Heart right ventricle (tissue), 16 donors: ENCODE measurements at regions of chr19 and their contacts with region 1.

Region 1: GRCh38 chr19:36378625-36379509 is at the start of gene ZFP14:
- DNase-seq: peak; percentile 93 to 94
- ATAC-seq: peak; percentile 98 to 100 (median 99)
- H3K4me3 ChIP-seq: peak within 1 kb of the TSS; percentile 54 to 86 (median 71)
- H3K27ac ChIP-seq: peak within 1 kb of the TSS; percentile 23 to 92 (median 82)
- H3K4me1 ChIP-seq: peaks cover 7 to 22% (median 11%) of the 10 kb centered on the region in 9 donors
- H3K27me3 ChIP-seq: no peaks in the 10 kb centered on the region
- CTCF ChIP-seq: peak in 6 of 9 donors; percentile 9 to 51 (median 36)
- total RNA-seq, gene ZFP14: 1.0 to 4.0 (median 2.5) TPM

Region 2: DNA sequence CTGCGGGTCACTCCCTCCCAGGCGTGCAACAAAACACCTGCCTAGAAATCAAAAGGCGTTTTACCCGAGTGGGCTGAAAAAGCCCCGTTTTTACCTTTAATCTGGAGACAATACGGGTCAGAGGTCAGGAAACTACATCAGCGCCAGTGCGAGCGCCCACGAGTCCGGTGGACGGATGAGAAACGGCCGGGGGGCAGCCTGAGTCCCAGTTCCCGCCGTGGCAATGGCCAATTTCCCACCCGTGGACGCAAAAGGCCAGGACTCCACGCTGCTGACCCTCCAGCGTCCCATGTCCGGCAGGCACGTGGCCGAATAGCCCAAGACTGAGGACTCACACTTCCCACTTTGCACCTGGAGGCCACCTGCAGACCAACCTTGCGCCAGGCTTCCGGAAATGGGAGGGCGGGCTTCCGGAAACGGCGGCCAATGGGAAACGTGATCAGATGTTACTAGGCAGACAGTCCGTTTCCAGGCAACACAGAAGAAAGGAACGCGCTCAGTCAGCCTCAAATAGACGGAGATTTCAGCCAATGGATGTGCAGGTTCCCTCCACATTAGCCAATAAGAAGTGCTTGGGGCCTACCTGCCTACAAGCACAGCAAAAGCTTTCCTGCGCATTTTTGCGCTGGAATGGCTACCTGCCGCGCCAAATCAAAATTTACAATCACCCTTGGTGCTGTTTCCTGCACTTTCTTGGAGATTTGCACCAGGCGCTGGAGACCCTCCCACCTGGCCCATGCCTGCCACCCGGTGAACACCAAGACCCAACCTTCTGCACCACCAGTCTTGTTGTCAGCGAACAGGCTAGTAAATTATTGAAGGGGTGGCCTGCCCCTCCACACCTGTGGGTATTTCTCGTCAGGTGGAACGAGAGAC is 47.3 kb before region 1 on chr19:
- intact Hi-C with region 1: loop called in 2 of 10 experiments (anchors 2 to 5 kb)
- DNase-seq: peak; percentile 80 to 93
- ATAC-seq: peak; percentile 97 to 100 (median 100)
- H3K4me3 ChIP-seq: peak overlapping the region; percentile 42 to 92 (median 80)
- H3K27ac ChIP-seq: peak overlapping the region in 7 of 10 donors; percentile 27 to 74 (median 42)
- H3K4me1 ChIP-seq: peaks cover 0 to 20% (median 10%) of the 10 kb centered on the region in 9 donors
- H3K27me3 ChIP-seq: no peaks in the 10 kb centered on the region
- CTCF ChIP-seq: peak in 2 of 9 donors; percentile 8 to 28

Region 3: DNA sequence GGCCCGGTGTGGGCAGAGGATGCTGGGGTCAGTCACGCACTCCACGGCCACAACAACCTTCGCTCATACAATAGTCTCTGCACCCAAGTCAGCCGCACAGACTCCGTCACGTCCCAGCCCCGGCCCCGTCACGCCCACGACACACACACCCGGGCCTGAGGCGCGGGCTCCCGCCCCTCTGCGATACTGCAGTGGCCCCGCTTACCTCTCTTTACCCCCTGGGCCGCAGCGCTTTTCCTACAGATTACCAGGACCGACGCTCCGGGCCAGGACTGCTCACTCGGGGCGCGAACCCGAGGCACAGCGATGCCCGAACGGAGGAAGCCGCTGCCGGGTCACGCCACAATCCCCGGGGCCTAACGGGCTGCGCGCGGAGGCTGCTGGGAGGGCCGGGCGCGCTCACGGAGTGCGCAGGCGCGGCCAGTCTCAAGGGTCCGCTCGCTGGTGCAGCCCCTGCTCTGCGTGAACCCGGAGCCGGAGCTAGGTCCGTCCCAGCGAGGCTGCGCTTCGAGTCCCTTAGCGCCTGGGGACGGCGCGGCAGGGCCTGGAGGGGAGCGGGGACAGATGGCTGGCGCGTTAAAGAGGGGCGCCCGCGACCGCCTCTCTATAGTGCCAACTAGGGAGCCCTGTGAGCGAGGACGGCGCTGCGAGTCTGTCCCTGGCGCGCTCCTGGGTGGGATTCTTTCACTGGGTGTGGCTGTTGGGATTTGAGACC is 39.6 kb after region 1 on chr19 and contains the start of gene ZFP82:
- intact Hi-C with region 1: loop called in 2 of 10 experiments (anchors 2 to 5 kb)
- DNase-seq: peak; percentile 86 to 90
- ATAC-seq: peak; percentile 96 to 98 (median 98)
- H3K4me3 ChIP-seq: peak within 1 kb of the TSS; percentile 59 to 94 (median 78)
- H3K27ac ChIP-seq: peak within 1 kb of the TSS; percentile 86 to 96 (median 92)
- H3K4me1 ChIP-seq: peaks cover 2 to 46% (median 17%) of the 10 kb centered on the region in 9 donors
- H3K27me3 ChIP-seq: peaks cover 0 to 21% (median 0%) of the 10 kb centered on the region in 7 donors
- CTCF ChIP-seq: peak in 1 of 9 donors; percentile 12
- total RNA-seq, gene ZFP82: 3.1 to 6.3 (median 4.3) TPM

Region 4: DNA sequence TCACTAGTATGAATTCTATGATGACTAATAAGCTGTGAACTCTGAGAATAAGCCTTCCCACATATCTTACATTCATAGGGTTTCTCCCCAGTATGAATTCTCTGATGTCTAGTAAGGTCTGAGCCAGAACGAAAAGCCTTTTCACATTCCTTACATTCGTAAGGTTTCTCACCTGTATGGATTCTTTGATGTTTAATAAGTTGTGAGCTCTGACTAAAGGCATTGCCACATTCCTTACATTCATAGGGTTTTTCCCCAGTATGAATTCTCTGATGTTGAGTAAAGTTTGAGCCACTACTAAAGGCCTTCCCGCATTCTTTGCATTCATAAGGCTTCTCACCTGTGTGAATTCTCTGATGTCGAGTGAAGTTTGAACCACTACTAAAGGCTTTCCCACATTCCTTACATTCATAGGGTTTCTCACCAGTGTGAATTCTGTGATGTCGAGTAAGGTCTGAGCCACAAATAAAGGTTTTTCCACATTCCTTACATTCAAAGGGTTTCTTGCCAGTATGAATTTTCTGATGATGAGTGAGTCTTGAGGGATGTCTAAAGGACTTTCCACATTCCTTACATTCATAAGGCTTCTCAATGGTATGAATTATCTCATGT is 70.3 kb after region 1 on chr19:
- intact Hi-C with region 1: no loop called
- DNase-seq: no peak
- ATAC-seq: no peak
- H3K4me3 ChIP-seq: no peak overlapping the region
- H3K27ac ChIP-seq: no peak overlapping the region
- H3K4me1 ChIP-seq: no peaks in the 10 kb centered on the region
- H3K27me3 ChIP-seq: no peaks in the 10 kb centered on the region
- CTCF ChIP-seq: no peak